ENCODE measurements at regions of chr22 and their contacts with region 1.

Region 1: GRCh38 chr22:19178656-19179496 is at the start of gene SLC25A1:
- DNase-seq: peak; percentile 84
- ATAC-seq: peak; percentile 75
- H3K4me3 Mint-ChIP-seq: peak within 1 kb of the TSS; percentile 85
- H3K27ac Mint-ChIP-seq: peak within 1 kb of the TSS; percentile 68
- H3K4me1 Mint-ChIP-seq: peaks cover 27% of the 10 kb centered on the region
- H3K27me3 Mint-ChIP-seq: no peaks in the 10 kb centered on the region
- CTCF ChIP-seq: no peak
- total RNA-seq, gene SLC25A1: 44.2 and 44.6 TPM in 2 replicates

Region 2: GRCh38 chr22:19291580-19292457 is 112.9 kb after region 1 on chr22 and contains the start of gene CLTCL1:
- CTCF ChIA-PET with region 1: no interaction called
- POLR2A ChIA-PET with region 1: no interaction called
- intact Hi-C with region 1: loop called (anchors 2 kb)
- DNase-seq: peak; percentile 75
- ATAC-seq: peak; percentile 78
- H3K4me3 Mint-ChIP-seq: peak within 1 kb of the TSS; percentile 91
- H3K27ac Mint-ChIP-seq: peak within 1 kb of the TSS; percentile 83
- H3K4me1 Mint-ChIP-seq: peaks cover 18% of the 10 kb centered on the region
- H3K27me3 Mint-ChIP-seq: peaks cover 12% of the 10 kb centered on the region
- CTCF ChIP-seq: no peak
- total RNA-seq, gene CLTCL1: 2.7 and 5.0 TPM in 2 replicates

Region 3: GRCh38 chr22:19432133-19432851 is 253.4 kb after region 1 on chr22 and contains the start of gene MRPL40:
- CTCF ChIA-PET with region 1: no interaction called
- POLR2A ChIA-PET with region 1: interaction called, 14 read pairs
- intact Hi-C with region 1: loop called (anchors 1 kb)
- DNase-seq: peak; percentile 83
- ATAC-seq: peak; percentile 87
- H3K4me3 Mint-ChIP-seq: peak within 1 kb of the TSS; percentile 90
- H3K27ac Mint-ChIP-seq: peak within 1 kb of the TSS; percentile 91
- H3K4me1 Mint-ChIP-seq: peaks cover 59% of the 10 kb centered on the region
- H3K27me3 Mint-ChIP-seq: no peaks in the 10 kb centered on the region
- CTCF ChIP-seq: no peak
- total RNA-seq, gene MRPL40: 24.0 and 24.3 TPM in 2 replicates

Region 4: DNA sequence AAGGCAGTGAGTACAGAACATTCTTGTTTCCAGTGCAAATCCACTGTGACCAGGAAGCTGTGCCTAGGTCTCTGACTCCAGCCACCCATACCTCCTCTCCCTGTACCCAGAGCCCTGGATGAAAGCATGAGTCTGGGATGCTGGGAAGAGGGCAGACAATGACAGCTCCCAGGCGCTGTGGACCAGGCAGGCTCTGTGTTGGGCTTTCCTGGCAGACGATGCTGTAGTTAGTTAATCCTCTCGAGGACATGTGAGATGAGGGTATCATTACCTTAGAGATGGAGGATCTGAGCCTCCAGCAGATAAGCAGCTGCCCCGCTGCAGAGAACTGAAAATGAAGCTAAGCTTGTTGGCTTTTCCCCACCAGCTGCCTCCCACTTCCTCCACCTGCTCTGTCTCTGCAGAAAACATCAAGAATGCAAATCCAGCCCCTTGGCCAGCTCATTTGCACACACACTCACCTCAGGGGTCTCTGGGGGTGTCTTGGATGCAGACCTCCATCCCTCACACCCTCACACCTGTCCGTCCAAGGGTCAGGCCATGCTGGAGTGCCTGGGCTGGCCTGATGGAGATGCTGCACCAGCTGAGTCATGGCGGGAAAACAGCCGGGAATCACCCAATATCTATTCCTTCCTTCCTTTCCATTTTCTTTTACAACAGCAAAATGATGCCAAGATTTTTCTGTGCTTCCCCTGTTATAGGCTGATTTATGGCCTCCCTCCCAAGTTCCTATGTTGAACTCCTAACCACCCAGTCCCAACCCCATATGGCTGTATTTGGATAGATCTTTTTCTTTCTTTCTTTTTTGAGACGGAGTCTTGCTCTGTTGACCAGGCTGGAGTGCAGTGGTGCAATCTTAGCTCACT is 440.5 kb after region 1 on chr22:
- CTCF ChIA-PET with region 1: interaction called, 3 read pairs
- POLR2A ChIA-PET with region 1: interaction called, 3 read pairs
- intact Hi-C with region 1: loop called (anchors 2 kb)
- DNase-seq: peak; percentile 31
- ATAC-seq: peak; percentile 43
- H3K4me3 Mint-ChIP-seq: peak overlapping the region; percentile 57
- H3K27ac Mint-ChIP-seq: peak overlapping the region; percentile 13
- H3K4me1 Mint-ChIP-seq: peaks cover 59% of the 10 kb centered on the region
- H3K27me3 Mint-ChIP-seq: peaks cover 20% of the 10 kb centered on the region
- CTCF ChIP-seq: no peak

Region 5: DNA sequence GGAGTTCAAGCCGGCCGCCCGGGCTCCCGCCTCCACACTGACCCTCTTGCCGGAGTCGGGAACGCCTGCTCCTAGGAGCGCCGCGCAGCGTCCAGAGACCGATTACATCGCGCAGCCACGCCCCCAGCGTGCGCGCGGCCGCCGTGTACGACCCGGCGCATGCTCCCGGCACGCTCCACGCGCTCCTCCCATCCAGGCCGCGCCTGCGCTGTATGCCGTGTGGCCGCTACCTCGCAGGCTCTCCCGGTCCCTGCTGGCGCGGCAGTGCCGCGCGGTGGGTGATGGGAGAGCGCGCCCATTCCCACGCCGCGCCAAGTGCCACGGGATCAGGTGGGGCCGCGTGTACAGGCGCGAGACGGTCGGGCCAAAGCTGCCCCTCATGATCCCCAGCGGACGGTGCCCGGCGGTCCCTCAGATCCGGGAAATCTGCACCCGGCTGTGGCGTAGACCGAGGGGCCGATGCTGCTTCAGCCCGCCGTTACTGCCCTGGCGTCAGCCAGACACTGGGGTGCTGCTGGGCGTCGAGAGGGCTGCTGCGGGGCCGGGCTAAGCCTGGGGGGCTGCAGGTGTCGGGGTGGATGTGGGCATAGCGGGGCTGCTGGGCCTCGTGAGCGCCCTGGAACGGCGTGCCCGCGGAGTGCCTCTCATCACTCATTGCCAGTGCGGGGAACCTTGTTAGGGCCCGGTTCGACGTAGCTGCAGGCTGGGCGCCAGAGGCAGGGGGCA is 676.1 kb after region 1 on chr22 and contains the starts of genes GNB1L and RTL10:
- CTCF ChIA-PET with region 1: no interaction called
- POLR2A ChIA-PET with region 1: no interaction called
- intact Hi-C with region 1: loop called (anchors 5 kb)
- DNase-seq: peak; percentile 98
- ATAC-seq: peak; percentile 92
- H3K4me3 Mint-ChIP-seq: peak within 1 kb of the TSS; percentile 91
- H3K27ac Mint-ChIP-seq: peak within 1 kb of the TSS; percentile 88
- H3K4me1 Mint-ChIP-seq: peaks cover 39% of the 10 kb centered on the region
- H3K27me3 Mint-ChIP-seq: no peaks in the 10 kb centered on the region
- CTCF ChIP-seq: no peak
- total RNA-seq, gene GNB1L: 5.8 and 6.3 TPM in 2 replicates
- total RNA-seq, gene RTL10: 9.1 and 12.1 TPM in 2 replicates

Measured in activated B cell treated with CpG ODN at 0.5 μM for 24 hours (primary cell).